ENCODE measurements at regions of chr7 and their contacts with region 1.

Region 1: GRCh38 chr7:99558306-99559174 is at the start of gene ZNF655:
- DNase-seq: peak; percentile 58
- H3K4me3 ChIP-seq: peak within 1 kb of the TSS; percentile 97
- H3K27ac ChIP-seq: peak within 1 kb of the TSS; percentile 97
- H3K27me3 ChIP-seq: no peaks in the 10 kb centered on the region
- CTCF ChIP-seq: no peak
- polyA plus RNA-seq, gene ZNF655: 62.9 and 79.3 TPM in 2 replicates

Region 2: DNA sequence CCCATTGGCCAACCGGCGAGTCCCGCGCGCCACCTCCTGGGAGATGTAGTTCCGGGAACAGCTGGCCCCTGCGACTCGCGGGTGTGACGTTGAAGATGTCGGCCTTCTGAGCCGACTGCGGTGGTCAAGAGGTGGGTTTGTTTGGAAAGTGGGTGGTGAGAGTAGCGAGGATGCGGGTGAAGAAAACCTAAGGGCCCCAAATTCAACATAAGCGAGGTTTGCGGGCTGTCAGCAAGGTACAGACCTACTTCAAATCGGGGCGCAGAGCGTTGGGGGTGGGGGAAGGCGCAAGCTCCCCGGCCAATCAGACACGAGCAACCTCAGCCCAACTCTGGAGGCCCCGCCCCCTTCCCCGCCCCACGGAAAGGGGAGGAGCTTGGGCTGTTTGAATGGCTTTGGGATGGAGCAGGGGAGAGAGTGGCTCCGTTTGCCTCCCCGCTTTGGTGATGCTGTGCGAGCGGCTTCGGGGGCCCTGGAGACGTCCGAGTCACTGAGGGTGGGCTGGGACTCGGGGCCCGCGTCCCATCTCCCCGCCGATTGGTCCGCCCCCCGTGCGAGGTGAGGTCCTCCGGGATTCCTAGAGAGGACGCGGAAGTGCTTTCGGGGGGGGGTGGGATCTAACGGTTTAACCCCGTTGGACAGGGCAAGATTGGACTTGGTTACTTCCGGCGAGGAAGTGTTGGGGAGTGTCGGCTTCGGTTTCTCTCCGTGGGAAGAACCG is 53.8 kb before region 1 on chr7 and contains the start of gene ZKSCAN5:
- CTCF ChIA-PET with region 1: no interaction called
- POLR2A ChIA-PET with region 1: interaction called, 27 read pairs
- DNase-seq: peak; percentile 90
- H3K4me3 ChIP-seq: peak within 1 kb of the TSS; percentile 90
- H3K27ac ChIP-seq: peak within 1 kb of the TSS; percentile 93
- H3K27me3 ChIP-seq: no peaks in the 10 kb centered on the region
- CTCF ChIP-seq: no peak
- polyA plus RNA-seq, gene ZKSCAN5: 11.5 and 13.4 TPM in 2 replicates

Region 3: DNA sequence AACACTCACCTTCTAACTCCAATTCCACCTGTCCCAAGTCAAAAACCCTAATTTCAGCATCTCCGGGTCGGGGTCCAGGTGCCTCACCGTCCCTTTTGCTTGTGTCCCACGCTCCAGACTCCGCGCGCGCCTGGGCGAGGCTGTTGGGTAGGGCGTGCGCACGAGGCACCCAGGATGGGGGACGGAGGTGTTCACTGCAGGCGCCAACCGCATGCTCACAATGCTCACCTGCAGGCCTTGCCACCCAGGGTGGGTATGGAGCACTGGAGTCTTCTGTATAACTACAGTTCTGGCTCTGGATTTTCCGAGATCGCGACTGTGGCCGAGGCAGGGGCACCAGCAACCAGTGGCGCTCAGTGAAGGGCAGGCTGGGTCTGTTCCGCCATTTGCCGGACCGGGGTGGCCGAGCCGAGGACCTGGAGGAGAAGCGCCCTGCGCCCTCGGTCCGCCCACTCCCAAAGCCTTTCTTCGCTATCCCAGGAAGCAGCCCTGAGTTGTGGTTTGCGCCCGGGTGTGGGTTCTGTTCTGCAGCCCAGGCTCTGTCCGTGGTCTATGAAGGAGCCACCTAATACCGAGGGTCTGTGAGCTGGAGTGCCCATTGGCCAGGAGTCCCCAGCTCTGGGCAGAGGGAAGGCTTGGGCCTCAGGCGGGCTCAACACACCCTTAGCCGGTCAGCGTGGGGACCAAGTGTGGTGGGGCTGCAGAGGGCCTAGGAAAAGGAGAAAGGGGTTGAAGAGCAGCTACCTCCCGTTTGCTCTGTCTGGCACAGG is 15.3 kb before region 1 on chr7:
- CTCF ChIA-PET with region 1: no interaction called
- POLR2A ChIA-PET with region 1: no interaction called
- DNase-seq: no peak
- H3K4me3 ChIP-seq: no peak overlapping the region
- H3K27ac ChIP-seq: no peak overlapping the region
- H3K27me3 ChIP-seq: no peaks in the 10 kb centered on the region
- CTCF ChIP-seq: no peak

Region 4: DNA sequence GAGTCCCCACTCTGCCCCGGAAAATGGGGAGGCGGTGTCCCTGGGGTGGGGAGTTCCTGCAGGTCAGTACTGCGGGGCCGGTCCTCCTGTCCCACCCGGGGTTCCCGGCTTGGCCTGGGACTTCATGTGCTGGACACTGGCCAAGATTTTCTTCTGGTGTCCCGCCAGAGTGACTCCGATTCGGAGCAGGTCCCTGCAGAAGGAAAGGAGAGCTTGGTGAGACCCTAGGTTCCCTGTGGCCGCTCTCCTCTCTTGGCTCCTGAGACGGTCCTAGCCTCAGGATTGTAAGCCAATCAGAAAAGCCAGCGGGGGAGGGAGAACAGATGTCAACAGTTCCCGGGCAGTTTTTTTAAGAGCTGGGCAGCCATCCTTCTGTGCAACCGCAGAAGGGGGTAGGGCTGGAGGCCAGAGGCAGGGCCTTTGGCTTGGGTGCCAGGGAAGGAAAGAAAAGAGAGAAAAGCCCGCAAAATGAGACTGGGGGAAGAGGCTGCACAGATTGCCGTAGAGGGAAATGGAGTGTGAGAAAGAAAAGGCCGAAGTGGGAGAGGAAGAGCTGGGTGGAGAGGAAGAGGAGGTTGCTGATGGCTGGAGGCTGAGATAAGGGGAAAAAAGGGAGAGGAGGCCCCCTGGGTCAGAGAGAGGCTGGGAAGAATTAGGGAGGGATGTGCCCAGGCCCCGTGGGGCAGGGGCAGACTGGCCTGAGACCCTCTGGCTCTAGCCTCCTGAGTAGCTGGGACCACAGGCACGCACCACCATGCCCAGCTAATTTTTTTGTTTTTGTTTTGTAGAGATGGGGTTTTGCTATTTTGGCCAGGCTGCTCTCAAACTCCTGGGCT is 1245.1 kb after region 1 on chr7:
- CTCF ChIA-PET with region 1: no interaction called
- POLR2A ChIA-PET with region 1: interaction called, 13 read pairs
- DNase-seq: peak; percentile 63
- H3K4me3 ChIP-seq: no peak overlapping the region
- H3K27ac ChIP-seq: peak overlapping the region; percentile 73
- H3K27me3 ChIP-seq: no peaks in the 10 kb centered on the region
- CTCF ChIP-seq: no peak